ENCODE measurements at regions of chr14 and their contacts with region 1.

Region 1: GRCh38 chr14:64060648-64061096 is 207.9 kb downstream of the SYNE2 start:
- DNase-seq: peak; percentile 34
- H3K4me3 Mint-ChIP-seq: no peak overlapping the region
- H3K27ac Mint-ChIP-seq: no peak overlapping the region
- H3K4me1 Mint-ChIP-seq: peaks cover 20% of the 10 kb centered on the region
- H3K27me3 Mint-ChIP-seq: no peaks in the 10 kb centered on the region
- CTCF ChIP-seq: no peak

Region 2: GRCh38 chr14:63972323-63972932 is 88.2 kb before region 1 on chr14:
- CTCF ChIA-PET with region 1: no interaction called
- intact Hi-C with region 1: no loop called
- DNase-seq: no peak
- H3K4me3 Mint-ChIP-seq: no peak overlapping the region
- H3K27ac Mint-ChIP-seq: no peak overlapping the region
- H3K4me1 Mint-ChIP-seq: no peaks in the 10 kb centered on the region
- H3K27me3 Mint-ChIP-seq: no peaks in the 10 kb centered on the region
- CTCF ChIP-seq: no peak

Region 3: GRCh38 chr14:64114166-64114565 is 53.5 kb after region 1 on chr14:
- CTCF ChIA-PET with region 1: no interaction called
- intact Hi-C with region 1: loop called (anchors 5 kb)
- DNase-seq: no peak
- H3K4me3 Mint-ChIP-seq: no peak overlapping the region
- H3K27ac Mint-ChIP-seq: no peak overlapping the region
- H3K4me1 Mint-ChIP-seq: peaks cover 11% of the 10 kb centered on the region
- H3K27me3 Mint-ChIP-seq: no peaks in the 10 kb centered on the region
- CTCF ChIP-seq: no peak

Region 4: DNA sequence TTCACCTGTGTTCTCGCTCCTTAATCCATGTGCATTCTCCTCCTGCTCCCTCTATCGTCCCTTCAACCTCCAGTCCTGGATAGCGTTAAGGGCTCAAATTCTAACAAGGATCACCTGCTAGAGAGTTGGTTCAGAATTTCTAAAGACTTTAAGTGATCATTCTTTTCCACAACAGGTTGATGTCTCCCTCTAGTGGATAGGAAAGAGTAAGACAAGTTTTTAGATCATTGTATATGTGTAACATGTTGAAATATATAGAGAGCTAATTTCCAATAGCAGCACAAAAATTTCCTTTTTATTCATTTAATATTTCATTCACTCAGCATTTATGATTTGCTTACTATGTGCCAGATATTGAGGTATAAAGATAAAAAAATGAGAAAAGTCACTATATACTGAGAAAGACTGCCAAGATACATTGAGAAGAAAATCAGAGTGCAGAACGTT is 242.8 kb after region 1 on chr14:
- CTCF ChIA-PET with region 1: no interaction called
- intact Hi-C with region 1: loop called (anchors 5 kb)
- DNase-seq: no peak
- H3K4me3 Mint-ChIP-seq: no peak overlapping the region
- H3K27ac Mint-ChIP-seq: no peak overlapping the region
- H3K4me1 Mint-ChIP-seq: no peaks in the 10 kb centered on the region
- H3K27me3 Mint-ChIP-seq: no peaks in the 10 kb centered on the region
- CTCF ChIP-seq: peak; percentile 46

Measured in Calu3 (cell line).